PC-3 (cell line): ENCODE measurements at regions of chrX and their contacts with region 1.

Region 1: DNA sequence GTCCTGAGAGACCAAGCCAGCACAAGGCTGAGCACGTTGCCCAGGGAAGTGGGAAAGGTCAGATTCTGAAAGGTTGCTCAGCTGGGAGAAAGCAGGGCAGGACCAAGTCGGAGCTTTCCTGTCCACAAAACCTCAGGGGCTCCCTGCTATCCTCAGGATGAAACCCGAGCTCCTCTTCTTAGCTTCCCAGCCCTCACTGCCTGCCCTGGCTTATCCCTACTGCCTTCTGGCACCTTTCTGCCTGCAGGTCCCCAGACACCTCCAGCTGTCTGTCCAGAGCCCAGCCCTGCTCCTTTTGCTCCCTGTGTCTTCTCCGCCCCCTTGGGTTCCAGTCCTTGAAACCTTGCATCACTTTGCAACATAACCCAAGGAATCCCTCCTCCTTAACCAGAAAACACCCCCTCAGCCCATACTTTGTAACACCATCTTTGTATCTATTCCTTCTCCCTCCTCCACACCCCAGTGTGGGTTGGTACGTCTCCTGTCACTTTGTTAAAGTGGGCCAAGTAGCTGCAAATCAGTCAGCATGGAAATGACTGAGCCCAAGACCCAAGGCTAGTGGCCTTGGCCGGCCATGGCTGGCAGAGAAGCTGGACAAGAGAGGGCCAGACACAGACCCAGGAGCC is 20.0 kb upstream of the PRRG3 start:
- DNase-seq: no peak
- ATAC-seq: no peak
- H3K4me3 ChIP-seq: no peak overlapping the region
- H3K27ac ChIP-seq: no peak overlapping the region
- H3K4me1 ChIP-seq: no peaks in the 10 kb centered on the region
- H3K27me3 ChIP-seq: no peaks in the 10 kb centered on the region
- CTCF ChIP-seq: no peak

Region 2: DNA sequence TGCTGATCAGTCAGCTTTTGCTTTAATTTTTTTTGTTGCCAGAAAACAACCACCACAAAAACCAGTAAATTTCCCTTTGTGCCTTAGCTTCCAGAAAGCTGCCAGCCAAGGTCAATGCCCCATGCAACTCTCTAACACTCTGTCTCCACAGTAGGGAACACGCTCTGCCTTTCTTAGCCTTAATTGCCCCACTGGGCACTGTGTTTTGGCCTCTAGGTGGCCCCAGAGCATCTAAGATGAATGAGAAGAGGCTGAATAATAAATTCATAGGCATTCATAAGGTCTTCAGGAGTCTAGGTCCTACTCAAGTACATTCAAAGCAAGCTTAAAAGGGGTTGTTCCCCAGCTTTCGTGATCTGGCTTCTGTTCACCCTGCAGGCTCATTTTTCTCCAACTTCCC is 169.4 kb before region 1 on chrX:
- CTCF ChIA-PET with region 1: no interaction called
- POLR2A ChIA-PET with region 1: no interaction called
- intact Hi-C with region 1: loop called (anchors 5 kb)
- DNase-seq: peak; percentile 44
- ATAC-seq: peak; percentile 48; the same call in 1 of the 2 replicates
- H3K4me3 ChIP-seq: no peak overlapping the region
- H3K27ac ChIP-seq: no peak overlapping the region
- H3K4me1 ChIP-seq: no peaks in the 10 kb centered on the region
- H3K27me3 ChIP-seq: no peaks in the 10 kb centered on the region
- CTCF ChIP-seq: peak; percentile 49

Region 3: DNA sequence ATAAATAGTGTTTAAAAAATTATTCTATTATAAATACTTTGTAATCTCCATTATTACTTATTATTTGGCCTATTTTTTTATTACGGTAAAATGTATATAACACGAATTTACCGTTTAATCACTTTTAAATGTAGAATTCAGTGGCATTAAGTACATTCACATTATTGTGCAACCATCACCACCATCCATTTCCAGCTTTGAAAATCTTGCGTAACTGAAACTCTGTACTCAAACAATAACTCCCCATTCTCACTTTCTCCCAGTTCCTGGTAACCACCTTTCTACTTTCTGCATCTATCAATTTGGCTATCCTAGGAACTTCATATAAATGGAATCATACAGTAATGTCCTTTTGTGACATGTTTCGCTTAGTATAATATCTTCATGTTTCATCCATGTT is 66.0 kb before region 1 on chrX:
- CTCF ChIA-PET with region 1: no interaction called
- POLR2A ChIA-PET with region 1: no interaction called
- intact Hi-C with region 1: no loop called
- DNase-seq: no peak
- ATAC-seq: no peak
- H3K4me3 ChIP-seq: no peak overlapping the region
- H3K27ac ChIP-seq: no peak overlapping the region
- H3K4me1 ChIP-seq: no peaks in the 10 kb centered on the region
- H3K27me3 ChIP-seq: no peaks in the 10 kb centered on the region
- CTCF ChIP-seq: no peak